ENCODE measurements at regions of chr2 and their contacts with region 1.

Region 1: GRCh38 chr2:196068271-196069209 is at the start of gene DNAH7:
- DNase-seq: peak; percentile 95
- H3K4me3 Mint-ChIP-seq: peak within 1 kb of the TSS; percentile 87
- H3K27ac Mint-ChIP-seq: no peak within 1 kb of the TSS
- H3K4me1 Mint-ChIP-seq: peaks cover 9% of the 10 kb centered on the region
- H3K27me3 Mint-ChIP-seq: peaks cover 2% of the 10 kb centered on the region
- total RNA-seq, gene DNAH7: 0.29 TPM in 1 of 2 experiments, not detected in the other

Region 2: DNA sequence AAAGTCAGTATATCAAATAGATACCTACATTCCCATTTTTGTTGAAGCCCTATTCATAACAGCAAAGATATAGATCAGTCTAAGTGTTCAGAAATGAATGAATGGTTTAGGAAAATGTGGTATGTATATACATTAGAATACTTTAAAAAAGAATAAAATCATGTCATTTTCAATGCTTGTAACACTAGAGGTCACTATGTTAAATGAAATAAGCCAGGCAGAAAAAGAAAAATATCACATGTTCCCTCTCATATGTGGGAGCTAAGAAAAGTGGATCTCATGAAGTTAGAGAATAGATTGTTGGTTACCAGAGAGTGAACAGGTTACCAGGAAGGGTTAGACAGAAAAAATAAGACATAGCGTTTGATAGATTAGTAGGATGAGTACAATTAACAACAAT is 1522.6 kb before region 1 on chr2:
- CTCF ChIA-PET with region 1: interaction called, 4 read pairs
- intact Hi-C with region 1: loop called (anchors 2 kb)
- DNase-seq: no peak
- H3K4me3 Mint-ChIP-seq: no peak overlapping the region
- H3K27ac Mint-ChIP-seq: no peak overlapping the region
- H3K4me1 Mint-ChIP-seq: no peaks in the 10 kb centered on the region
- H3K27me3 Mint-ChIP-seq: peaks cover 7% of the 10 kb centered on the region

Region 3: DNA sequence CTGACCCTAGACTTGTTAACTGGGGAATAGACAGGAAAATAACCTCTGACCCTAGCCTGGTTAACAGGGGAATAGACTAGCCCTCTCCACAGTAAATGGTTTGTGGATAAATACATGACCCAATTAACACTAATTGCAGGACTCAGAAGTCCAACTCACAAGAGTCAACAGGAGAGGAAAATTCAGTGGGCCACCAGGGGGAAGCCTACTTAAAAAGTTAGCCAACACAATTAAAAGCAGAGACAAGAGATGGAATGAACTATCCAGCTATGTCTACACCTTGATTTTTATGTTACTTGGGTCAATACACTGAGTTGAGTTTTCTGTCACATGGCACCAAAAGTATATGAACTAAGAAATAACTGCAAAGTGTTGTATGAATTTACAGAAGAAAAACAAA is 570.4 kb before region 1 on chr2:
- CTCF ChIA-PET with region 1: no interaction called
- intact Hi-C with region 1: loop called (anchors 5 kb)
- DNase-seq: peak; percentile 76
- H3K4me3 Mint-ChIP-seq: no peak overlapping the region
- H3K27ac Mint-ChIP-seq: no peak overlapping the region
- H3K4me1 Mint-ChIP-seq: peaks cover 44% of the 10 kb centered on the region
- H3K27me3 Mint-ChIP-seq: no peaks in the 10 kb centered on the region

Region 4: DNA sequence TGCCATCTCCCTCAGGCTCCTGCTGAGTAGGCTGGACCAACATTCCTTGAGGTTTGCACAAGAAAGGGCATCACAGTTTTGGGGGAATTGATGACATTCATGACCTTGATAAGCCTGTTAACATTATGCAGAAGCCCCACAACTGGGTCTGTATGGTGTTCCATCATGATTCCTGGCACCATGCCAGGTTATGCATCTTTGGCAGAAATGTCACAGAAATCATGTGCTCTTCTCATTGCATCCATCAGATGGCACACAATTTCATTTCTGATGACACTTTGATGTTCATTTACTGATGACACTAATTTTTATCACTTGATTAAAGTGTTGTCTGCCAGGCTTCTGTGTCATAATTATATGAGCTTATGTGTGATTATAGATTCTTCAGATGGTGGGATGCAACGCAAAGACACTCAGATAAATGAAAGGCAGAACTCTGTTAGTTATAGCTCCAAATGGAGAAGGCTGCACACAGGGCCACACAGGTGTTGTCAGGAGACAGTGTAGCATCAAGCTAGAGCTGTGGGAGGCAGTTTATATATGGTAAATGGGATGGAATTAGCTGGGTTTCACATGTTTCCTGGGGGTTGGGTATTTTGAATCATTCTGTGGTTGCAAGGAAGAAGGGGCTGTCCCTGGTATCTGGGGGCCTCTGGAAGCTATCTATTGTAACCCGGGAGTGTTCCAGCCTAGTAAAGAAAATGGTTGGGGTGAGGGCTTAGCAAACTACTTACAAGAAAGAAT is 220.2 kb before region 1 on chr2:
- CTCF ChIA-PET with region 1: no interaction called
- intact Hi-C with region 1: loop called (anchors 5 kb)
- DNase-seq: no peak
- H3K4me3 Mint-ChIP-seq: no peak overlapping the region
- H3K27ac Mint-ChIP-seq: no peak overlapping the region
- H3K4me1 Mint-ChIP-seq: peaks cover 2% of the 10 kb centered on the region
- H3K27me3 Mint-ChIP-seq: no peaks in the 10 kb centered on the region

Region 5: DNA sequence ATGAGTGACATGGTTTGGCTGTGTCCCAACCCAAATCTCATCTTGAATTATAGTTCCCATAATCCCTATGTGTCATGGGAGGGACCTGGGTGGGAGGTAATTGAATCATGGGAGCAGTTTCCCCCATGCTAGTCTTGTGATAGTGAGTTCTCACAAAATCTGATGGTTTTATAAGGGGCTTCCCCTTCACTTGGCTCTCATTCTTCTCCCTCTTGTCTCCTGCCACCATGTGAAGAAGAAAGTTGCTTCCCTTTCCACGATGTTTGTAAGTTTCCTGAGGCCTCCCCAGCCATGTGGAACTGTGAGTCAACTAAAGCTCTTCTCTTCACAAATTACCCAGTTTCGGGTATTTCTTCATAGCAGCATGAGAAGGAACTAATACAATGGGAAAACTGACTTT is 13.9 kb before region 1 on chr2:
- CTCF ChIA-PET with region 1: interaction called, 12 read pairs
- intact Hi-C with region 1: no loop called
- DNase-seq: no peak
- H3K4me3 Mint-ChIP-seq: no peak overlapping the region
- H3K27ac Mint-ChIP-seq: no peak overlapping the region
- H3K4me1 Mint-ChIP-seq: no peaks in the 10 kb centered on the region
- H3K27me3 Mint-ChIP-seq: no peaks in the 10 kb centered on the region

Region 6: DNA sequence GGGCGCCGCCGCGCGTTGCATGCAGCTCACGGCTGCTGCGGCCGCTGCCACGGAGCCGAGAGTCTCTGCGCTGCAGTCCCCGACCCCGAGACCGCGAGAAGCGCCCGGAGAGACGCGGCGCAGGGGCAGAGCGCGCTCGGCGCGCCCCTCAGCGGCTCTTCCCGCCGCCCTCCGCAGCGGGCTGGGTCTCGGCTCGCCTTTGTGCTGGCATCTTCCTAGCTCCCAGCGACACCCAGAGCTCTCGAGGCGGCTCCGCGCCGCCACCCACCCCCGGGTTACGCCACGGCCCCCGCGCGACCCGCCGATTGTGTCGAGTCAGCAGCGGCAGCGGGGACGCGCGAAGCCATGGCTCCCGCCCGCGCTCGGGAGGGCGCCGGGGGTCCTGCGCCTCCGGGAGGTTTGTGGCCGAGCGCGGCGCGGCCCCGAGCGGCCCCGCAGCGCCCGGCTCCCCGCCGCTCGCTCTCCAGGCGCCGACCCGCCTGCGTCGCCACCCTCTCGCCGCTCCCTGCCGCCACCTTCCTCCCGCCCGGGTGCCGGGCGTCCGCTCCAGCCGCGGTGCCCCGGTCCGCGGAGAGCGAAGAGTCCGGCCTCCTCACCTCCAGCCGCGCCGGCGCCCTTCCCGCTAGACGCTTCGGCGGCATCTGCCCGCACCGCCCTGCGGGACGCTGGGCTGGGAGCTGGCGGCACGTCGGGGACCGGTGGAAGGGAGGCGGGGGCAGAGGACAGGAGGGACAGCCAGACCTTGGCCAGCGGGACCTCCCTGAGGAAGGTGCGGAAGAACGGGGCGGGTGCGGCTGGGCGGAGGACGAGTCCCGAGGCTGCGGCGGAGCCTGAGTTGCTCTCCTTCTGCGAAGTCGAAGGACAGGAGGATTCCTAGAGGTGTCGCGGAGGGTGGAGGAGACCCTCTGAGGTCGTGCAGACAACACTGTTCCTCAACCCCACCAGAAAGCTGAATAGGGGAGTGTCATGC is 524.7 kb after region 1 on chr2:
- CTCF ChIA-PET with region 1: no interaction called
- intact Hi-C with region 1: loop called (anchors 10 kb)
- DNase-seq: peak; percentile 25
- H3K4me3 Mint-ChIP-seq: peak within 1 kb of the TSS; percentile 67
- H3K27ac Mint-ChIP-seq: no peak within 1 kb of the TSS
- H3K4me1 Mint-ChIP-seq: peaks cover 7% of the 10 kb centered on the region
- H3K27me3 Mint-ChIP-seq: peaks cover 56% of the 10 kb centered on the region

Measured in activated naive CD4-positive, alpha-beta T cell treated with anti-CD3 and anti-CD28 coated beads for 36 hours (primary cell).